Naive thymus-derived CD4-positive, alpha-beta T cell (primary cell): ENCODE measurements at regions of chr9 and their contacts with region 1.

Region 1: DNA sequence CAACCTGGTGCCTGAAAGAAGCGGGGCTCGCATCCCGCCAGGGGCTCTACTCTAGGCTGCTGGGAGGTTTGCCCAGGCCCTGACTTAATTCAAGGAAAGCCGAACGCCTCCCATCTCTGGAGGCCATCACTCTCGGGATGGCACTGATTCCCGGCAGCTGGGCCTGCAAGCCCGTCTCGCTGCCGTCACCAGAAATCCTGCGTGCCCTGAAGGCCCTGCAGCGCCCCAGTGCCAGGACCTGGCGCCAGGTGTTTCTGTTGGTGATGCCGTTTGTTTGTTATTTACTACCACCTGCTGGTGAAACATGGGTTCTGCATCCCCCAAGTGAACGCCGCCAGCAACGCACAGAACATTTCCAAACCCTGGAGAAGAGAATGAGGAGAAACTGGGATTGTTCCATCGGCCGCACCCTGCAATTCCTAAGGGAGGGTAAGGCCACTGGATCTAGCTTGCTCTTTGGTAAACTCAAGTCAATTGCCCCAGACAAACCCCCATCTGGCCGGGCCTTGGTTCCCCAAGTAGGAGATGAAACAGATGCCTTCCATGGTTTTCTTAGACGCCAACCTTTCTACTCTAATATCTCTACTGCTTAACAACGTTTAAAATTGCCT is 77.9 kb downstream of the AK8 start:
- DNase-seq: peak; percentile 37 to 74 (median 66)
- ATAC-seq: peak; percentile 88
- H3K4me3 ChIP-seq: no peak overlapping the region
- H3K4me3 Mint-ChIP-seq: no peak overlapping the region
- H3K27ac ChIP-seq: no peak overlapping the region
- H3K27ac Mint-ChIP-seq: no peak overlapping the region
- H3K4me1 ChIP-seq: peaks cover 4 to 13% of the 10 kb centered on the region in 2 donors
- H3K4me1 Mint-ChIP-seq: peaks cover 0 to 10% (median 4%) of the 10 kb centered on the region in 7 donors
- H3K27me3 ChIP-seq: no peaks in the 10 kb centered on the region
- H3K27me3 Mint-ChIP-seq: peaks cover 8 to 59% (median 34%) of the 10 kb centered on the region in 5 donors

Region 2: GRCh38 chr9:132507746-132508469 is 292.2 kb before region 1 on chr9:
- CTCF ChIA-PET with region 1: interaction called, 3 read pairs
- POLR2A ChIA-PET with region 1: no interaction called
- intact Hi-C with region 1: loop called in 1 of 2 experiments (anchors 1 kb)
- DNase-seq: peak; percentile 21 to 62 (median 52)
- ATAC-seq: peak; percentile 74
- H3K4me3 ChIP-seq: no peak overlapping the region
- H3K4me3 Mint-ChIP-seq: no peak overlapping the region
- H3K27ac ChIP-seq: no peak overlapping the region
- H3K27ac Mint-ChIP-seq: no peak overlapping the region
- H3K4me1 ChIP-seq: peaks cover 0 to 7% of the 10 kb centered on the region in 2 donors
- H3K4me1 Mint-ChIP-seq: peaks cover 0 to 14% (median 12%) of the 10 kb centered on the region in 7 donors
- H3K27me3 ChIP-seq: no peaks in the 10 kb centered on the region
- H3K27me3 Mint-ChIP-seq: peaks cover 3 to 24% (median 15%) of the 10 kb centered on the region in 5 donors

Region 3: DNA sequence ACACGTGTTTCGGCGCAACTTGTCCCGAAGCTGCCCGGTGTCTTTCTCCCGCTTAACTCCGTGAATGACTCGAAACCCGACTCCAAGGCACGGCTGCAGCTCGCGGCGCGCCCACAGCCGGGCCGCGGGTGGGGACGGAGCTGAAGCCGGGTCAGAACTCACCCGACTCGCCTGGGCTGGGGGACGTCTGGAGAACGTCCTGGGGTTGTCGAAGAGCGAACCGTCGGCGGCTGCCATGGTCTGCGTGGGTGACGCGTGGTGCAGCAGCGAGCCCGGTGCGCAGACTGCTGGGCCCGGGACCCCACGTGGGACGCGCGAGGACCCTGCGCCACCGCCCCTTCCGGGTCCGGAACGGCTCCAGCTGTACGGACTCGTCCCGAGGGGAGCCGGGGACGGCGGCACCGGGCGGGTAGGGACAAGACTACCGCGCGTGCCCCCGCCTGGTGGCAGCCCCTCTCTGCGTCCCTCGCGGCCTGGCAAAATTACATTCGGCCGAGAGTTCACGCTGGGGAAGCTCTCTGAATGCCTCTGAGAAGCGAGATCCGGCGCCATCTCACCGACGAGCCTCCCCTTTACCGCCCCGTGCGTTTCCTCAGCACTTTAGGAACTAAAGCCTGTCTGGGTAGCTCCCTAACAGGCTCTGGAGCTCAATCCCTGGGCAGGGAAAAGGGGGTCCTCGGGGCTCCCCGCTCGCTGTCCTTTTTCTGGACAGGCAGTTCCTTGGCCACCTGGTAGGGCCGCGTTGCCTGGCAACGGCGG is 130.3 kb before region 1 on chr9 and contains the start of gene DDX31:
- CTCF ChIA-PET with region 1: no interaction called
- POLR2A ChIA-PET with region 1: no interaction called
- intact Hi-C with region 1: loop called in 1 of 2 experiments (anchors 1 kb)
- DNase-seq: peak; percentile 84 to 97 (median 88)
- ATAC-seq: peak; percentile 90
- H3K4me3 ChIP-seq: peak within 1 kb of the TSS; percentile 100
- H3K4me3 Mint-ChIP-seq: peak within 1 kb of the TSS; percentile 83 to 92 (median 90)
- H3K27ac ChIP-seq: peak within 1 kb of the TSS; percentile 94
- H3K27ac Mint-ChIP-seq: peak within 1 kb of the TSS; percentile 87 to 96 (median 91)
- H3K4me1 ChIP-seq: peaks cover 16 to 19% of the 10 kb centered on the region in 2 donors
- H3K4me1 Mint-ChIP-seq: peaks cover 20 to 67% (median 55%) of the 10 kb centered on the region in 7 donors
- H3K27me3 ChIP-seq: no peaks in the 10 kb centered on the region
- H3K27me3 Mint-ChIP-seq: no peaks in the 10 kb centered on the region
- total RNA-seq, gene DDX31: 13.9 to 28.0 (median 18.7) TPM

Region 4: GRCh38 chr9:132694157-132694556 is 106.0 kb before region 1 on chr9:
- CTCF ChIA-PET with region 1: no interaction called
- POLR2A ChIA-PET with region 1: no interaction called
- intact Hi-C with region 1: loop called (anchors 1 kb)
- DNase-seq: peak in 5 of 9 donors; percentile 5 to 27 (median 15)
- ATAC-seq: peak; percentile 77
- H3K4me3 ChIP-seq: no peak overlapping the region
- H3K4me3 Mint-ChIP-seq: no peak overlapping the region
- H3K27ac ChIP-seq: no peak overlapping the region
- H3K27ac Mint-ChIP-seq: peak overlapping the region in 1 of 9 donors; percentile 4
- H3K4me1 ChIP-seq: no peaks in the 10 kb centered on the region
- H3K4me1 Mint-ChIP-seq: peaks cover 0 to 4% (median 2%) of the 10 kb centered on the region in 7 donors
- H3K27me3 ChIP-seq: no peaks in the 10 kb centered on the region
- H3K27me3 Mint-ChIP-seq: peaks cover 0 to 9% (median 5%) of the 10 kb centered on the region in 5 donors

Region 5: DNA sequence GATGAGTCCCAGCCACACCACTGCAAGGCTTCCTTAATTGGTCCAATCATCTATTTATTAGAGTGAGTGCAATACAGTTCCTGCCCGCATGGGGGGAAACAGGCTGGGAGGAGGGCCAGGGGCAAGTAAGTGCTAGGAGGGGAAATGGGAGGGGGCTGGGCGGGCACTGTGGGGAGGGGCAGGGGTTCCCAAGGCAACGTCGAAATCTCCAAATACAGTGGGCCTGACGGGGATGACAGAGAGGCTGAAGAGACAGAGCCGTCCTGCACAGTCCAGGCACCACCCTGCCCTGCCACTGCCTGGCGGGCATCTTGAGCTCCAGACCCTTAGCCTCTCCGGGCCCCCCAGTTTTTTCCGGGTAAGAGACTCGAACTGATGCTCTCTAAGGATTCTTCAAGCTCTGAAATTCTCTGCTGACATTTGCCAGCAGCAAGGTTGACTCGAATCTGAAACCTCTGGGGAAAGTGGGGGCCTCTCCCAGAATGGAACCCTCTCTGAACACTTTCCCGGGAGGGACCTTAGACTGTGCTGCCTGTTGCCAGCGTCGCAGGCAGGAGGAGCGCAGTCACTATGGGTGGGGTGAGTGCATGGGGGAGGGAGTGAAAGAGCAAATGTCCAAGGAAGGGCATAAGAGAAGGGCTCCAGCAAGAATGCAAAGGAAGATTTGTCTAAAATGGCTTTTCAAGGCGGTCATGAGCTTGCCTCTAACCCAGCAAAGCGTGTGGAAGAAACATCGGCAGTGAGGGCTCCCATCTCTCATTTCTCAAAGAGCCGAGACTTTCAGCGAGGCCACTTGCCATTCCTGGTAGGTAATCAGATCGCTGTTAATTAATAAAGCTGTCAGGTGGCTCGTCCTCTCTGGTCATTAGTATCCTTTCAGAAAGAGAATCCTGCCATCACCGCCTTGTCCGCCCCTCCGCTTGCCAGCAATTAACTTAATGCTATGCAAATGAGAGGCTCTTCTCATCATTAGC is 30.9 kb before region 1 on chr9:
- CTCF ChIA-PET with region 1: interaction called, 5 read pairs
- POLR2A ChIA-PET with region 1: no interaction called
- intact Hi-C with region 1: loop called (anchors 1 to 2 kb)
- DNase-seq: peak in 8 of 9 donors; percentile 42 to 69 (median 60)
- ATAC-seq: peak; percentile 86
- H3K4me3 ChIP-seq: peak overlapping the region; percentile 86
- H3K4me3 Mint-ChIP-seq: peak overlapping the region; percentile 95 to 100 (median 98)
- H3K27ac ChIP-seq: peak overlapping the region; percentile 77
- H3K27ac Mint-ChIP-seq: peak overlapping the region; percentile 90 to 99 (median 97)
- H3K4me1 ChIP-seq: peaks cover 3 to 9% of the 10 kb centered on the region in 2 donors
- H3K4me1 Mint-ChIP-seq: peaks cover 8 to 37% (median 27%) of the 10 kb centered on the region in 7 donors
- H3K27me3 ChIP-seq: no peaks in the 10 kb centered on the region
- H3K27me3 Mint-ChIP-seq: peaks cover 0 to 20% (median 0%) of the 10 kb centered on the region in 5 donors

Region 6: GRCh38 chr9:132780230-132781007 is 19.7 kb before region 1 on chr9:
- CTCF ChIA-PET with region 1: no interaction called
- POLR2A ChIA-PET with region 1: no interaction called
- intact Hi-C with region 1: no loop called
- DNase-seq: no peak
- ATAC-seq: no peak
- H3K4me3 ChIP-seq: no peak overlapping the region
- H3K4me3 Mint-ChIP-seq: peak overlapping the region in 4 of 10 donors; percentile 0 to 54 (median 18)
- H3K27ac ChIP-seq: no peak overlapping the region
- H3K27ac Mint-ChIP-seq: peak overlapping the region in 1 of 9 donors; percentile 68
- H3K4me1 ChIP-seq: no peaks in the 10 kb centered on the region
- H3K4me1 Mint-ChIP-seq: peaks cover 0 to 18% (median 5%) of the 10 kb centered on the region in 7 donors
- H3K27me3 ChIP-seq: peaks cover 0 to 4% of the 10 kb centered on the region in 2 donors
- H3K27me3 Mint-ChIP-seq: peaks cover 28 to 45% (median 34%) of the 10 kb centered on the region in 5 donors

Region 7: GRCh38 chr9:132973713-132974112 is 173.6 kb after region 1 on chr9:
- CTCF ChIA-PET with region 1: no interaction called
- POLR2A ChIA-PET with region 1: no interaction called
- intact Hi-C with region 1: loop called in 1 of 2 experiments (anchors 5 kb)
- DNase-seq: no peak
- ATAC-seq: no peak
- H3K4me3 ChIP-seq: no peak overlapping the region
- H3K4me3 Mint-ChIP-seq: no peak overlapping the region
- H3K27ac ChIP-seq: no peak overlapping the region
- H3K27ac Mint-ChIP-seq: no peak overlapping the region
- H3K4me1 ChIP-seq: no peaks in the 10 kb centered on the region
- H3K4me1 Mint-ChIP-seq: peaks cover 5 to 12% (median 8%) of the 10 kb centered on the region in 7 donors
- H3K27me3 ChIP-seq: peaks cover 0 to 7% of the 10 kb centered on the region in 2 donors
- H3K27me3 Mint-ChIP-seq: peaks cover 12 to 34% (median 25%) of the 10 kb centered on the region in 5 donors